ENCODE measurements at regions of chr12 and their contacts with region 1.

Region 1: GRCh38 chr12:3885277-3886094 is 12.3 kb upstream of the PARP11 start:
- DNase-seq: peak; percentile 8
- H3K4me3 ChIP-seq: peak overlapping the region; percentile 59
- H3K27ac ChIP-seq: no peak overlapping the region
- H3K27me3 ChIP-seq: peaks cover 14% of the 10 kb centered on the region
- CTCF ChIP-seq: peak; percentile 86

Region 2: GRCh38 chr12:3872800-3873636 is 12.5 kb before region 1 on chr12 and contains the start of gene PARP11:
- CTCF ChIA-PET with region 1: interaction called, 55 read pairs
- POLR2A ChIA-PET with region 1: no interaction called
- DNase-seq: peak; percentile 88
- H3K4me3 ChIP-seq: peak within 1 kb of the TSS; percentile 79
- H3K27ac ChIP-seq: peak within 1 kb of the TSS; percentile 95
- H3K27me3 ChIP-seq: no peaks in the 10 kb centered on the region
- CTCF ChIP-seq: no peak
- polyA plus RNA-seq, gene PARP11: 5.4 and 6.9 TPM in 2 replicates

Region 3: DNA sequence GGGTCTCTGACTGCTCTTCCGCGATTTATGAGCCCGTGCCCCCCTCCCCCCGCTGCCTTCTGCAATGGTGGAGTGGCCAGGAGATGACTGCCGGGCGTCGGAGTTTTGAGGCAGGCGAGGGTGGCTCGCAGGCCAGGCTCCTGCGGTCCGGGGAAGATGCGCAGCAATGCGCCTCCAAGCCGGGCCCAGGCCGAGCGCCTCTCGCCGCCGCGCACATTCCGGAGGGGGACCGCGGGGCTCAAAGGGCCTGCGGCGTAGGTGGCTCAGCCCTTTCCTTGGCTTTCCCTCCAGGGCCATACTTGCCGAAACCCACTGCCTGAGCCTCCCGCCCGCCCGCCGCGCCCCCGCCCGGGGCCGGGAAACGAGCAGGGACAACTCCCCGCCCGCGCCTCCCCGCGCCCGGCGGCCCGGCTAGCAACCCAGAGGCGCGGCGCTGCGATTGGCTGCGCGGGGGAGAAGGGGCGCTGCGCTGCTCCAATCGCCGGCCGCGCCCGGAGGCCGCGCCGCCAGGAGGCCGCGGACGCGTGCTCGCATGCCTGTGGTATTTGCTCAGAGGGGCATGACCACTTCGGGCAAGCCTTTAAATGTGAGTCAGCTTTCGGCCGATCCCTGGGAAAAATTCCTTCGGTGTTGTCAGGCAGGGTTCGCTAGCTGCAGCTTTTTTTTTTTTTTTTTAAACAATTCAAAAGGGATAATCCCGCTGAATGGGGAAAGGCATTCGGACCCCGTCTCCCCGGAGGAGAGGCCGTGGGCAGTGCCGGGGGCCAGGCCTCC is 145.6 kb after region 1 on chr12:
- CTCF ChIA-PET with region 1: interaction called, 156 read pairs
- POLR2A ChIA-PET with region 1: no interaction called
- DNase-seq: peak; percentile 96
- H3K4me3 ChIP-seq: peak overlapping the region; percentile 48
- H3K27ac ChIP-seq: peak overlapping the region; percentile 89
- H3K27me3 ChIP-seq: peaks cover 9% of the 10 kb centered on the region
- CTCF ChIP-seq: no peak

Region 4: DNA sequence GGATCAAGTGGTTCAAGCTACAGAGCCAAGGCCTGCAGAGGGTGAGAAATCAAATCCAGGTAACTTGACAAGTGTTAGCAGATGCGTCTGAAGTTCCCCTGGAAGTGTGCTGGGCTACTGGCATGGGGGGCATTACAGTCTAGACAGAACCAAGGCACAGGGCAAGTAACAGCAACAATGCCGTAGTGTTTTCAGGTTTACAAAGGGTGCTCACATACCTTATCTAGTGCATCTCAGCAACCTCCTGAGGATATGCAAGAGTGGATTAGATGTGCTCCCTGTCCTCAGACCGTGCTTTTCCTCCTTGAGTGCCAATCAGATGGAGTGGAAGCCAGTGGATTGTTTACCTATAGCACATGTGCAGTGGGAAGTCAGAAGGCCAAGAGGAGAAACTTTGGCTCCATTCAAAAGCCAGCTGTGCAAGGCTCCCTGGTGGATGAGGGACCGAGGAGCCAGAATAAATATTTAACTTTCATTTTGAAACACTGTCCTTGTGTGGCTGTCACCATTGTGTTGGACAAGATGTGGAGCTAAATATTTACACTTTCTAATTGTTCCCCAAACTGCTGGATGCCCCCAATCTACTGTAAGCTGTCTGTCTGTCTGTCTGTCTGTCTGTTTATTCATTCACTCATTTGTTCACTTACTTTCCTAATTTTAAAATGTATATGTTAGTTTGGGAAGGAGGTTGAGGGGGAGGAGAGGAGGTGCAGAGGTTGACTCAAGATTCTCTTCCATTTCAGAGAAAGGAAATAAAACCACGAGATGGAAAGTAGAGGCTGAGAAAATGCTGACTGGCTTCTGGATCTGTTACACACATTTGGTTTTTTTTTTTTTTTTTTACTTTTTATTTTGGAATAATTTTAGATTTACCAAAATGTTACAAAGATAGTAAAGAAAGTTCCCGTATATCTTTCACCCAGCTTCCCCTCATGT is 171.7 kb after region 1 on chr12:
- CTCF ChIA-PET with region 1: no interaction called
- POLR2A ChIA-PET with region 1: no interaction called
- DNase-seq: no peak
- H3K4me3 ChIP-seq: no peak overlapping the region
- H3K27ac ChIP-seq: no peak overlapping the region
- H3K27me3 ChIP-seq: no peaks in the 10 kb centered on the region
- CTCF ChIP-seq: no peak

Region 5: DNA sequence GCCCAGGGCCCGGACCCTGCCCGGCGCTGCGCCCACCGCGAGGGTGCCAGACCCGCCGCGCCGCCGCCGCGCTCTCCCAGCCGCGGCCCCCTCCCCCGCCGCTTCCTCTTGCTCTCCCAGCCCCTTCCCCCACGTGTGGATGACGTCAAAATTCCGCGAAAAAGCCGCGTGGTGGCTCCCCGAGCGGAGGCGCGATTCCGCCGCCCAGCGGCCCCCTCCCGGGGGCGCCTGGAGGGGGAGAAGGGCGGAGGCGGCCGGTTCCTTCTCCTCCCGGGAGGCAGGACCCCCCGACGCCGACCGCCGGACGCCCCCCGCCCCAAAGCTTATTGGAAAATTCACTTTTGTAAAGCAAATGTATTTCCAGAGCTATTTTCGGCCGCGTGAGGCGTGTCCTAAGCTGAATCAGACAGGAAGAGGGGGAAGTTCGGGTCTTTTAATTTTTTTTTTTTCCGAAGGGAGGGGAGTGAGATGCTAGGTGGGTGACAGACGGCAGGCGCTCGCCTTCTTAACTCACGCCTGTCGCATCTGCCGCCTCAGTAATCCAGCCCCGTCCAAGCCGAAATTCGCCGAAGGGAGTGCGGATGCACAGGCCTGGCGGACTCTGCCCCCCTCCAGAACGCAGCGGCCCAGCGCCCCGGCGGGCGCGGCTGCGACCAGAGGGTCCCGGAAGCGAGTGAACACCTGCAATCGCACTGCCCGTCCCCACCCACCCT is 383.9 kb after region 1 on chr12:
- CTCF ChIA-PET with region 1: interaction called, 14 read pairs
- POLR2A ChIA-PET with region 1: no interaction called
- DNase-seq: no peak
- H3K4me3 ChIP-seq: peak overlapping the region; percentile 35
- H3K27ac ChIP-seq: no peak overlapping the region
- H3K27me3 ChIP-seq: peaks cover 76% of the 10 kb centered on the region
- CTCF ChIP-seq: 0 out of 2 replicates have a peak, but pooled peaks have one; percentile 1

Region 6: GRCh38 chr12:4366090-4366489 is 480.6 kb after region 1 on chr12:
- CTCF ChIA-PET with region 1: no interaction called
- POLR2A ChIA-PET with region 1: no interaction called
- DNase-seq: no peak
- H3K4me3 ChIP-seq: no peak overlapping the region
- H3K27ac ChIP-seq: no peak overlapping the region
- H3K27me3 ChIP-seq: peaks cover 5% of the 10 kb centered on the region
- CTCF ChIP-seq: no peak

Region 7: DNA sequence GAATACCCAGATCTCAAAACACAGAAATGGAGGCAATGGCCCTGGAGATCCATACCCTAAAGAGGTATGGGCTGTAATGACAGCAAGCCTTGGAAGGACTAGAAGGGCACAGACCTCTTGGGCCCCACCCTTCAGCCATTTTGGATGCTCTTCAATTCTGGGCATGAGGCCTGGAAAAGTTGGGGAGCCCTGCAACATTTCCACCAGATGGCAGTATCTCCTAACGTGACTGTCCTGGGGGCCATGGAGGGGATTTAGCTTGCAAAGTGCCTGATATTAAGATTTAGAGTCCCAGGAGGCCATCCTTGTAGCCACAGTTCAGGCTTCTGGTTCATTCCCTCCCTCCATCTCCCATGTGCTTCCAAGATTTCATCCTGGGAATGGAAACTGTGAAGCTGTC is 1188.4 kb after region 1 on chr12:
- CTCF ChIA-PET with region 1: interaction called, 10 read pairs
- POLR2A ChIA-PET with region 1: no interaction called
- DNase-seq: no peak
- H3K4me3 ChIP-seq: no peak overlapping the region
- H3K27ac ChIP-seq: no peak overlapping the region
- H3K27me3 ChIP-seq: peaks cover 15% of the 10 kb centered on the region
- CTCF ChIP-seq: peak; percentile 56

Measured in AG04450 (cell line).